Common myeloid progenitor, CD34-positive (primary cell): ENCODE measurements at regions of chr7 and their contacts with region 1.

Region 1: GRCh38 chr7:108114117-108114841 is 15.9 kb downstream of the LAMB4 start:
- DNase-seq: peak; percentile 25 to 48 (median 47)
- H3K4me3 ChIP-seq: no peak overlapping the region
- H3K27ac ChIP-seq: no peak overlapping the region
- H3K4me1 ChIP-seq: no peaks in the 10 kb centered on the region
- H3K27me3 ChIP-seq: no peaks in the 10 kb centered on the region

Region 2: GRCh38 chr7:108135446-108136190 is 21.3 kb after region 1 on chr7:
- CTCF ChIA-PET with region 1: interaction called, 12 read pairs
- POLR2A ChIA-PET with region 1: no interaction called
- DNase-seq: peak; percentile 54 to 93 (median 89)
- H3K4me3 ChIP-seq: peak overlapping the region in 2 of 7 experiments; percentile 14 to 29
- H3K27ac ChIP-seq: peak overlapping the region; percentile 41 to 54
- H3K4me1 ChIP-seq: peaks cover 16 to 52% (median 20%) of the 10 kb centered on the region in 4 experiments
- H3K27me3 ChIP-seq: no peaks in the 10 kb centered on the region

Region 3: DNA sequence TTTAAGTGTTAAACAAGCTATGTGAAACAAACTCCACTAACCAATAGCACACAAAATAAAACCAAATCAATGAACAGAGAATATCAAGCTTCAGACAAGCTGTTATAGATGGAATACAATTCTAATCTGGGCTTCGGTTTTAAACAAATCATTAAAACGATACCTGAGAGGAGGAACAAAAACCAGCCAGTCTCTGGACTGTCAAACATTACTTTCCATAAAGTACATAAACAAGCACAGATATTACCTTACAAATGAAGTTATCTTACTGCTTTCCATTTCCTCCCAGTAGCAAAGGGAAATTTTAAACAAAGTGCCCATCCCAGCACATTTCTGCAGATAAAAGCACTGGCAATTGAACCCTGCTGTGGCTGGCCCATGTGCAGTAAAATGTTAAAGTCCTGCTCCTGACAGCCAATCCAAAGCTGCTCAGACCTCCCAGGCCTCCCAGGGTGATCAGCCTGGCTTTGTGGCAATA is 213.9 kb after region 1 on chr7:
- CTCF ChIA-PET with region 1: no interaction called
- POLR2A ChIA-PET with region 1: no interaction called
- DNase-seq: peak in 1 of 3 donors; percentile 12
- H3K4me3 ChIP-seq: no peak overlapping the region
- H3K27ac ChIP-seq: no peak overlapping the region
- H3K4me1 ChIP-seq: peaks cover 0 to 10% (median 0%) of the 10 kb centered on the region in 4 experiments
- H3K27me3 ChIP-seq: peaks cover 0 to 3% (median 0%) of the 10 kb centered on the region in 5 experiments